Activated CD8-positive, alpha-beta T cell treated with anti-CD3 and anti-CD28 coated beads for 36 hours (primary cell): ENCODE measurements at regions of chr5 and their contacts with region 1.

Region 1: GRCh38 chr5:59660737-59661136 is 232.8 kb downstream of the PDE4D start:
- DNase-seq: no peak
- ATAC-seq: no peak
- H3K4me3 Mint-ChIP-seq: no peak overlapping the region
- H3K27ac Mint-ChIP-seq: no peak overlapping the region
- H3K4me1 Mint-ChIP-seq: peaks cover 12% of the 10 kb centered on the region
- H3K27me3 Mint-ChIP-seq: no peaks in the 10 kb centered on the region
- CTCF ChIP-seq: peak; percentile 36

Region 2: GRCh38 chr5:59506285-59506877 is 154.4 kb before region 1 on chr5:
- CTCF ChIA-PET with region 1: interaction called, 10 read pairs
- POLR2A ChIA-PET with region 1: no interaction called
- intact Hi-C with region 1: no loop called
- DNase-seq: no peak
- ATAC-seq: no peak
- H3K4me3 Mint-ChIP-seq: no peak overlapping the region
- H3K27ac Mint-ChIP-seq: no peak overlapping the region
- H3K4me1 Mint-ChIP-seq: peaks cover 1% of the 10 kb centered on the region
- H3K27me3 Mint-ChIP-seq: no peaks in the 10 kb centered on the region
- CTCF ChIP-seq: peak; percentile 55

Region 3: GRCh38 chr5:59648949-59649921 is 11.5 kb before region 1 on chr5:
- CTCF ChIA-PET with region 1: no interaction called
- POLR2A ChIA-PET with region 1: no interaction called
- intact Hi-C with region 1: no loop called
- DNase-seq: no peak
- ATAC-seq: no peak
- H3K4me3 Mint-ChIP-seq: no peak overlapping the region
- H3K27ac Mint-ChIP-seq: no peak overlapping the region
- H3K4me1 Mint-ChIP-seq: peaks cover 3% of the 10 kb centered on the region
- H3K27me3 Mint-ChIP-seq: no peaks in the 10 kb centered on the region
- CTCF ChIP-seq: no peak